Activated CD4-positive, alpha-beta memory T cell treated with anti-CD3 and anti-CD28 coated beads for 36 hours (primary cell): ENCODE measurements at regions of chr15 and their contacts with region 1.

Region 1: GRCh38 chr15:66619151-66619903 is 53.5 kb upstream of the LCTL start:
- DNase-seq: peak; percentile 60
- H3K4me3 Mint-ChIP-seq: no peak overlapping the region
- H3K27ac Mint-ChIP-seq: no peak overlapping the region
- H3K4me1 Mint-ChIP-seq: no peaks in the 10 kb centered on the region
- H3K27me3 Mint-ChIP-seq: peaks cover 21% of the 10 kb centered on the region

Region 2: GRCh38 chr15:66630801-66631351 is 11.5 kb after region 1 on chr15:
- CTCF ChIA-PET with region 1: interaction called, 13 read pairs
- POLR2A ChIA-PET with region 1: no interaction called
- intact Hi-C with region 1: no loop called
- DNase-seq: no peak
- H3K4me3 Mint-ChIP-seq: no peak overlapping the region
- H3K27ac Mint-ChIP-seq: no peak overlapping the region
- H3K4me1 Mint-ChIP-seq: no peaks in the 10 kb centered on the region
- H3K27me3 Mint-ChIP-seq: no peaks in the 10 kb centered on the region

Region 3: DNA sequence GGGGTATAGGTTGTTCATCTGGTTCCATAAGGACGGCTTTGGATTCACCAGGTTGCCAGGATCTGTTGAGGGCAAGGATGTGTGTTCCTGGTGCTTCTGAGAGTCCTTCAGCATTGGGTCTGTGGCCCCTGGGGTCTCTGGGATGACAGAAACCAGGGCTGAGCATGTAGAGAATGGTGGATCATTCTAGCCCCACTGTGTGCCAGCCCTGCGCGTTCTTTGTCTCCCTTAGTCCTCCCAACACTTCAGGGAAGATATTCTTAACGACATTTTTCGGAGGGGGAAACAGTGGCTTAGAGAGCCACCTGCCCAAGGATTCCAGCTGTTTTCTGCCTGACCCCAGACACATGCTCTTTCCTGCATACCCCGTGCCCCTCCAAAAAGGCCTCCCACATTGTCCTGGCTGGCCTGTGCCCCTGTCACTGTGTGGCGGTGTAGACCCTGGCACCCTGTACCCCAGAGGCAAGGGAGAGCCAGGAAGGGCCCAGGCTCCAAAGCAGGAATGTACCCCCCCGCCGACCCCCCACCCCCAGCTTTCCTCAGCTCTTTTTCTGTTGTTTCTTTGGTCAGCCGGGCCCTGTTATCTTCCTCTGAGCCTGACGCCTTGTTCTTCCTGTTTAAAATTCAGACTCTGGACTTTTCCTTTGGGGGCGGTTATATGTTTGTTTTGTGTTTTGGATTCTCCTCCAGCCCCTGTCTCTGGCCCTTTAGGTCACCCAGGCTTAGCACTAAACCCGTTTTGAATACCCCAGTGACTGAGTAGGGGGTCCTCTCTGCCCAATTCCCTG is 24.9 kb after region 1 on chr15:
- CTCF ChIA-PET with region 1: no interaction called
- POLR2A ChIA-PET with region 1: no interaction called
- intact Hi-C with region 1: no loop called
- DNase-seq: no peak
- H3K4me3 Mint-ChIP-seq: no peak overlapping the region
- H3K27ac Mint-ChIP-seq: no peak overlapping the region
- H3K4me1 Mint-ChIP-seq: no peaks in the 10 kb centered on the region
- H3K27me3 Mint-ChIP-seq: no peaks in the 10 kb centered on the region

Region 4: DNA sequence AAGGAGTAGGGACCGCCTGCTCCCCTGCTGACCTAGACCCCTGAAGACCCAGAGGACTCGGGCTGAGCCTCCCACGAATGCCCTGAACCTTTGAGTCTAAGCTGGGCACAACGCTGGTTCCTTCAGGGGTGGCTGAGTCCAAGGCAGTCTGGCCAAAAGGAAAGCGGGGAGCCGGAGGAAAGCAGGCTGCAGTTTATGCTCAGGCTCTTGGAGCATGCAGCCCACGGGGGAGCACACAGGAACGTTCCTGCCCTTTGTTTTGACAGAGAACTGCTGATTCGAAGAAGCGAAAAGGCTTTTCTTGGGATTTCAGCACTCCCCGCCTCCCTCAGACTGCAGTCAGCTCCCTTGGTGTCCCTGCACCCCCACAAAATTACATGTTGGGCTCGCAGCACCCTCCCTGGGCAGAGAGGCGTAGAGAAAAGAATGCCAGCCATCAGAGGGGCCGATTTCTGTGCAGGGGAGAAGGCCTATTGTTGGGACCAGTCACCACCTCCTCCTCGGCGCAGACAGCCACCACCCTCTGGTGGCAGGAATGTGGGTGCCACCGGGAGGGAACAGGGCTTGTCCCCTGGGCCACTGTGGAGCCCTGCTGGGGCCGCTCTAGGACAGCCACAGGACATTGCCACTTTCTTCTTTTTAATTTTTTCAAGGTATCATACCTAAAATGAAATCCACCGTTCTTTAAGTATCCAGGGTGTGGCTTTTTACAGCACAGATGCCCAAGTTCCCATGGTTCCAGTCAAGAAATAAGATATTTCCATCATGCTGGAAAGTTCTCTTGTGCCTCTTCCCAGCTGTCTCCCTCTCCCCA is 154.9 kb after region 1 on chr15:
- CTCF ChIA-PET with region 1: interaction called, 12 read pairs
- POLR2A ChIA-PET with region 1: no interaction called
- intact Hi-C with region 1: loop called (anchors 5 kb)
- DNase-seq: peak; percentile 63
- H3K4me3 Mint-ChIP-seq: no peak overlapping the region
- H3K27ac Mint-ChIP-seq: no peak overlapping the region
- H3K4me1 Mint-ChIP-seq: no peaks in the 10 kb centered on the region
- H3K27me3 Mint-ChIP-seq: no peaks in the 10 kb centered on the region